ENCODE measurements at regions of chr11 and their contacts with region 1.

Region 1: GRCh38 chr11:130636722-130637517 is 188.5 kb downstream of the ADAMTS15 start:
- DNase-seq: peak; percentile 70 to 95
- ATAC-seq: peak; percentile 88 to 92
- H3K4me3 ChIP-seq: no peak overlapping the region
- H3K27ac ChIP-seq: peak overlapping the region; percentile 96 to 97
- H3K4me1 ChIP-seq: peaks cover 58% of the 10 kb centered on the region
- CTCF ChIP-seq: no peak
- EP300 ChIP-seq: peak; percentile 77 to 81; a peak in 4 of 5 replicates
- POLR2A ChIP-seq: no peak
- RAD21 ChIP-seq: peak; percentile 8 to 51; a peak in 3 of 5 replicates

Region 2: GRCh38 chr11:130448416-130449309 is 188.3 kb before region 1 on chr11 and contains the start of gene ADAMTS15:
- CTCF ChIA-PET with region 1: no interaction called
- POLR2A ChIA-PET with region 1: interaction called, 10 read pairs
- DNase-seq: peak; percentile 75 to 83
- ATAC-seq: peak; percentile 97 to 98
- H3K4me3 ChIP-seq: peak within 1 kb of the TSS; percentile 56
- H3K27ac ChIP-seq: peak within 1 kb of the TSS; percentile 70 to 83
- H3K4me1 ChIP-seq: peaks cover 16% of the 10 kb centered on the region; the same call in 1 of the 3 replicates
- CTCF ChIP-seq: no peak
- EP300 ChIP-seq: no peak
- POLR2A ChIP-seq: peak; percentile 72
- RAD21 ChIP-seq: no peak; a peak in 2 of 5 replicates
- polyA plus RNA-seq, gene ADAMTS15: 2.2 and 2.7 TPM in 2 replicates

Region 3: DNA sequence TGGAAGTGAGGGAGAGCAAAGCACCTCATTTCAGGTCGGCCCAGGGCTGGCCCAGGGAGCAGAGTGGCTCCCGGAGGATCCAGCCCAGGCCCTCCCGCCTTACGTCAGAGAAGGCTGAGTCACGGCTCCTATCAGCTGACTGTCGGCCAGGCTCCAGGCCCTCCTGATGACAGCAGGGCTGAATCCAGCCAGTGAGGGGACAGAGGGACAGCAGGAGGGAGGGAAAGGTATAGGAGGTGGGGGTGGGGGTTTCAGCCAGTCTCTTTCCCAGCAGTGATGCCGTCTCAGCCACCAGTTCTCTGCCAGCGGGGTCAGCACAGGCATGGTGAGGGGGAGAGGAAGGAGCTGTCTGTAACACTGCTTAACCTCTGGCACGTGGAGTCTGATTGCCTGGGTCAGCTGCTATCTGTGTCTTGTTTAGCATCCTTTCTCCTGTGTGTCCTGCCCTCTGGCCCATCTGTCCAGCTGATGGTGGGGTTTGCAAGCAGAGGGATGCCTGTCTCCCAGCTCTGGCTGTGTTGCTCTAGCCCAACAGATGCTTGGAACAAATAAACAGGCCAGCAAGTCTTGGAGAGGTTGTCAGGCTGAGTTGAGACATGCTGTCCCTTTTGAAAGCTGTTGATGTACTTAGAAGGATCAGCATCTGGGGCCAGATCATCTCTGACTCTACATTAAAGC is 114.5 kb before region 1 on chr11:
- CTCF ChIA-PET with region 1: no interaction called
- POLR2A ChIA-PET with region 1: interaction called, 10 read pairs
- DNase-seq: peak; percentile 79 to 81
- ATAC-seq: peak; percentile 100
- H3K4me3 ChIP-seq: no peak overlapping the region
- H3K27ac ChIP-seq: peak overlapping the region; percentile 78 to 83
- H3K4me1 ChIP-seq: peaks cover 18% of the 10 kb centered on the region
- CTCF ChIP-seq: no peak
- EP300 ChIP-seq: no peak
- POLR2A ChIP-seq: no peak
- RAD21 ChIP-seq: no peak

Region 4: DNA sequence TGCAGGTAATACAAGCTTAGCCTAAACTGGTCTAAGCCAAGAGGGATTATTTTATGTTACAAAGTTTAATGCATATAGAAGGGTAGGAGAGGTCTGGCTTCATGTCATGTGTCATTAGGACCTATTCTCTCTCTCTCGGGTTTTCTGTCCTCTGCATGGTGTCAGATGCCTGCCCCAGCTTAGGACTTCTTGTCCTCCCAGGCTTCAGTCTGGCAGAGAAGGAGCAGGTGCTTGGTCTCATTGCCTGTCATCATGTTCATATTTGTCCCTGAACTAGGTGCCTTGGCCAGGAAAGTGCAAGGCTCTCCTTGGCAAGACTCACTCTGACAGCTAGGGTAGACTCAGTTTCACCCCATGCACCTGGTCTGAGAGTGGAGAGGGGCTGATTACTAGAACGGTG is 62.2 kb before region 1 on chr11:
- CTCF ChIA-PET with region 1: no interaction called
- POLR2A ChIA-PET with region 1: no interaction called
- DNase-seq: no peak
- ATAC-seq: no peak
- H3K4me3 ChIP-seq: no peak overlapping the region
- H3K27ac ChIP-seq: no peak overlapping the region
- H3K4me1 ChIP-seq: peaks cover 1% of the 10 kb centered on the region; the same call in 2 of the 3 replicates
- CTCF ChIP-seq: no peak
- EP300 ChIP-seq: no peak
- POLR2A ChIP-seq: no peak
- RAD21 ChIP-seq: no peak

Measured in A549 (cell line).